ENCODE measurements at regions of chr3 and their contacts with region 1.

Region 1: GRCh38 chr3:98602078-98602678 is 8.8 kb upstream of the CPOX start:
- DNase-seq: peak; percentile 55
- ATAC-seq: peak; percentile 90
- H3K4me3 ChIP-seq: no peak overlapping the region
- H3K27ac ChIP-seq: no peak overlapping the region
- H3K4me1 ChIP-seq: peaks cover 12% of the 10 kb centered on the region
- H3K27me3 ChIP-seq: no peaks in the 10 kb centered on the region
- CTCF ChIP-seq: peak; percentile 73 to 83 (median 81); a peak in 5 of 6 replicates
- EP300 ChIP-seq: no peak
- POLR2A ChIP-seq: no peak
- RAD21 ChIP-seq: peak; percentile 99

Region 2: GRCh38 chr3:98039322-98040024 is 562.7 kb before region 1 on chr3:
- CTCF ChIA-PET with region 1: interaction called, 24 read pairs
- POLR2A ChIA-PET with region 1: no interaction called
- RAD21 ChIA-PET with region 1: interaction called, 22 read pairs
- SMC1A ChIA-PET with region 1: interaction called, 13 read pairs
- in situ Hi-C with region 1: loop called (anchors 10 kb)
- intact Hi-C with region 1: no loop called
- DNase-seq: peak; percentile 79
- ATAC-seq: peak; percentile 97
- H3K4me3 ChIP-seq: peak overlapping the region; percentile 66; the same call in 1 of the 2 replicates
- H3K27ac ChIP-seq: no peak overlapping the region
- H3K4me1 ChIP-seq: no peaks in the 10 kb centered on the region
- H3K27me3 ChIP-seq: no peaks in the 10 kb centered on the region; a peak in 1 of 4 replicates
- CTCF ChIP-seq: peak; percentile 61 to 95 (median 67)
- EP300 ChIP-seq: no peak
- POLR2A ChIP-seq: no peak
- RAD21 ChIP-seq: peak; percentile 86

Region 3: DNA sequence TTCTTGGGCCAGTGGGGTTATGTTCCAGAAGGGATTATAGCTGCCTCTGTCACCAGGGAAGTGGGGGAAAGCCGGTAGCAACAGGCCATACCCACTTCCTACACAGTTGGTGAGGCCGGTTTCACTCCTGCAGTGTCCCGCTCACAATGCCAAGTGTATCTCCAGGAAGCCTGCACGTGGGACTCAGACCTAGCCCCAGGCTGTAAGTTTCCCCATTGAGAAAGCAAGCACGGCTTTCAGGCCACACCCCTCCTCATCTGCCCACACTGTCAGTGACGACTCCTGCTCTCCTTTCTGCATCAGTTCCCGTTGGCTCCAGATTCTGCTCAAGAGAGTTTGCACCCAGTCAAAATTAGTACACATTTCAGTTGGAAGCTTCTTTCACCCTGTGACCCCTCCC is 42.9 kb after region 1 on chr3:
- CTCF ChIA-PET with region 1: interaction called, 43 read pairs
- POLR2A ChIA-PET with region 1: no interaction called
- RAD21 ChIA-PET with region 1: interaction called, 12 read pairs
- SMC1A ChIA-PET with region 1: interaction called, 12 read pairs
- in situ Hi-C with region 1: no loop called
- intact Hi-C with region 1: no loop called
- DNase-seq: no peak
- ATAC-seq: peak; percentile 55
- H3K4me3 ChIP-seq: no peak overlapping the region
- H3K27ac ChIP-seq: no peak overlapping the region
- H3K4me1 ChIP-seq: peaks cover 31% of the 10 kb centered on the region
- H3K27me3 ChIP-seq: no peaks in the 10 kb centered on the region
- CTCF ChIP-seq: no peak
- EP300 ChIP-seq: no peak
- POLR2A ChIP-seq: no peak
- RAD21 ChIP-seq: no peak

Region 4: DNA sequence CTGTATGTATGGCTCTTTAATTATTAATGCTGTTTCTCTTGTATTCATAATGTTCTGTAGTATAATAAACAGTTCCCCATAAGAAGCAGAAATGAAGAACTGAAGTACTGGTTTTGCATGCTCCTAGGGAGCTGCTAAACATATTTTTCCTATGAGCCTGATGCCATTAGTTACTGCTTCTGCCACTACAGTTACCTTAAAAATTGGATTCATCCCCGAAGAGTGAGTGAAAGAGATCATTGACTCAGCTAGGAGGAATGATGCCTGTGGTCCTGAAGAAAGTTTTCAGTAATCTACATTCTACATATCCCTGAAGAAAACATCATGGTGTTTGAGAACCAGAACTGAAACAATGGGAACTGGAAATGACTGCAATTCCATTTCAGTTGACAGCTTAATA is 123.9 kb after region 1 on chr3:
- CTCF ChIA-PET with region 1: interaction called, 42 read pairs
- POLR2A ChIA-PET with region 1: no interaction called
- RAD21 ChIA-PET with region 1: interaction called, 31 read pairs
- SMC1A ChIA-PET with region 1: interaction called, 27 read pairs
- in situ Hi-C with region 1: no loop called
- intact Hi-C with region 1: loop called (anchors 1 kb)
- DNase-seq: no peak
- ATAC-seq: no peak
- H3K4me3 ChIP-seq: no peak overlapping the region
- H3K27ac ChIP-seq: no peak overlapping the region
- H3K4me1 ChIP-seq: no peaks in the 10 kb centered on the region
- H3K27me3 ChIP-seq: no peaks in the 10 kb centered on the region
- CTCF ChIP-seq: no peak
- EP300 ChIP-seq: no peak
- POLR2A ChIP-seq: no peak
- RAD21 ChIP-seq: no peak

Region 5: DNA sequence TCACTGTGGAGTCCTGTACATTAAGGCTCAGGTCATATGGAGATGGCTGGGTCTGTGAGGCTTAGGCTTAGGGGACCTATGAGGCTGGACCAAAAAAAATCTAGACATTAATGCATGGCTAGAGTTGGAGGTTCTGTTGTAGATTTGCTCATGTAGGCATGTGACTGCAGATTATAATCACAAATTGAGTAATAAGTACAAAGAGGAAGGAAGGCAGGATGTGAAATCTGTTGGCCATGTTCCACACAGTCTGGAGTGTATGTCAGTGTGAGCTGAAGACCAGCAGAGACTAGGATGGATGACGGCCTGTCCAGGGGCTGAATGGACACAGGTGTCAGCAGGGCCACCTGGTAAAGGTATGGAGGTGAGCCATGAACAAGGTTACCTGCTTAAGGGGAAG is 160.9 kb after region 1 on chr3 and contains the start of gene ST3GAL6:
- CTCF ChIA-PET with region 1: interaction called, 22 read pairs
- POLR2A ChIA-PET with region 1: interaction called, 4 read pairs
- RAD21 ChIA-PET with region 1: interaction called, 6 read pairs
- SMC1A ChIA-PET with region 1: interaction called, 4 read pairs
- in situ Hi-C with region 1: no loop called
- intact Hi-C with region 1: no loop called
- DNase-seq: no peak
- ATAC-seq: peak; percentile 67
- H3K4me3 ChIP-seq: peak within 1 kb of the TSS; percentile 35; the same call in 1 of the 2 replicates
- H3K27ac ChIP-seq: peak within 1 kb of the TSS; percentile 5; the same call in 1 of the 2 replicates
- H3K4me1 ChIP-seq: peaks cover 29% of the 10 kb centered on the region
- H3K27me3 ChIP-seq: no peaks in the 10 kb centered on the region
- CTCF ChIP-seq: no peak
- EP300 ChIP-seq: no peak
- POLR2A ChIP-seq: 0 out of 2 replicates have a peak, but pooled peaks have one; percentile 34
- RAD21 ChIP-seq: no peak
- polyA plus RNA-seq, gene ST3GAL6: 19.5 to 31.4 TPM

Region 6: DNA sequence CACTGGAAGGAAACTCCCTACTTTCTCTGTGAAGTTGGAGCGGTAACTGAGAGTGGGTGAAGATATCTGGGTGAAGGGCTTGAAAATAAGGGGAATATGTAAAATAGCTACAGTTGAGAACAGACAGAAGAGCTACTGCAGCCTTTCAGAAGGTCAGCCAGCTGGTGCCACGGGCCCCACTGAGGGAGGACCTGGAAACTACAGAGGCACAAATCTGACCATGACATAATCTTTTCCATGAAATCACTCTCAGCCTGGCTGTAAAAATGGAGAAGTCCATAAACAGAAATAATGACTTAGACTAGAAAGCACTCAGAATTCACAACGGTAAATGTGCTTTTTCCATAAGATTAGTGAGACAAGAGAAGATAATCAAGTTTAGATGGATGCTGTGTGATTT is 207.4 kb after region 1 on chr3:
- CTCF ChIA-PET with region 1: interaction called, 373 read pairs
- POLR2A ChIA-PET with region 1: interaction called, 5 read pairs
- RAD21 ChIA-PET with region 1: interaction called, 224 read pairs
- SMC1A ChIA-PET with region 1: interaction called, 408 read pairs
- in situ Hi-C with region 1: loop called (anchors 5 kb)
- intact Hi-C with region 1: loop called (anchors 1 kb)
- DNase-seq: no peak
- ATAC-seq: peak; percentile 72
- H3K4me3 ChIP-seq: no peak overlapping the region
- H3K27ac ChIP-seq: no peak overlapping the region
- H3K4me1 ChIP-seq: no peaks in the 10 kb centered on the region
- H3K27me3 ChIP-seq: no peaks in the 10 kb centered on the region
- CTCF ChIP-seq: no peak
- EP300 ChIP-seq: no peak
- POLR2A ChIP-seq: no peak
- RAD21 ChIP-seq: no peak

Region 7: DNA sequence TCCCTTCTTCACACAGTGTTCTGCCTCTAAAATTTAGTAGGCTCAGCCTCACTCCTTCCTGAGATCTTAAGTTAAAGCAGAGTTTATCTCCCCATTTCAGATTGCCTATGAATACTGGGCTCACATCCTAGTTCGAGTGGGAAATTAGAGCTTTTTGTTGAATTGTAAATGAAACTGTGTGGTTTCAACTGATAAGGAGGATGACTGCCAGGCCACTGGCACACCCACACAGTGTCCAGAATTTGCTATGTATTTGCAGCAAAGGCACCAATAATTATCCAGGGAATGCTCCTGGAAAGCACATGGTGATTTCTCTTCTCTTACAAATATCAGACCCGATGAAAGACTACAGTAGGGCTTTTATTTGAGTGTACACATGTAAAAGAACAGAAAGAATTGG is 728.1 kb after region 1 on chr3:
- CTCF ChIA-PET with region 1: no interaction called
- POLR2A ChIA-PET with region 1: no interaction called
- RAD21 ChIA-PET with region 1: no interaction called
- SMC1A ChIA-PET with region 1: no interaction called
- in situ Hi-C with region 1: no loop called
- intact Hi-C with region 1: no loop called
- DNase-seq: no peak
- ATAC-seq: no peak
- H3K4me3 ChIP-seq: no peak overlapping the region
- H3K27ac ChIP-seq: no peak overlapping the region
- H3K4me1 ChIP-seq: no peaks in the 10 kb centered on the region
- H3K27me3 ChIP-seq: no peaks in the 10 kb centered on the region
- CTCF ChIP-seq: no peak
- EP300 ChIP-seq: no peak
- POLR2A ChIP-seq: no peak
- RAD21 ChIP-seq: no peak

Region 8: GRCh38 chr3:99753268-99753975 is 1151.2 kb after region 1 on chr3:
- CTCF ChIA-PET with region 1: no interaction called
- POLR2A ChIA-PET with region 1: no interaction called
- RAD21 ChIA-PET with region 1: no interaction called
- SMC1A ChIA-PET with region 1: no interaction called
- in situ Hi-C with region 1: loop called (anchors 25 kb)
- intact Hi-C with region 1: no loop called
- DNase-seq: peak; percentile 40
- ATAC-seq: peak; percentile 87
- H3K4me3 ChIP-seq: no peak overlapping the region
- H3K27ac ChIP-seq: no peak overlapping the region
- H3K4me1 ChIP-seq: no peaks in the 10 kb centered on the region
- H3K27me3 ChIP-seq: no peaks in the 10 kb centered on the region
- CTCF ChIP-seq: peak; percentile 65 to 80 (median 71); a peak in 5 of 6 replicates
- EP300 ChIP-seq: no peak
- POLR2A ChIP-seq: no peak
- RAD21 ChIP-seq: peak; percentile 91